ENCODE measurements at regions of chr15 and their contacts with region 1.

Region 1: GRCh38 chr15:29747837-29748417 is 74.3 kb downstream of the TJP1 start:
- DNase-seq: peak; percentile 49
- H3K4me3 ChIP-seq: no peak overlapping the region
- H3K27ac ChIP-seq: no peak overlapping the region
- H3K4me1 ChIP-seq: no peaks in the 10 kb centered on the region
- H3K27me3 ChIP-seq: no peaks in the 10 kb centered on the region
- CTCF ChIP-seq: peak; percentile 7 to 21
- POLR2A ChIP-seq: no peak

Region 2: DNA sequence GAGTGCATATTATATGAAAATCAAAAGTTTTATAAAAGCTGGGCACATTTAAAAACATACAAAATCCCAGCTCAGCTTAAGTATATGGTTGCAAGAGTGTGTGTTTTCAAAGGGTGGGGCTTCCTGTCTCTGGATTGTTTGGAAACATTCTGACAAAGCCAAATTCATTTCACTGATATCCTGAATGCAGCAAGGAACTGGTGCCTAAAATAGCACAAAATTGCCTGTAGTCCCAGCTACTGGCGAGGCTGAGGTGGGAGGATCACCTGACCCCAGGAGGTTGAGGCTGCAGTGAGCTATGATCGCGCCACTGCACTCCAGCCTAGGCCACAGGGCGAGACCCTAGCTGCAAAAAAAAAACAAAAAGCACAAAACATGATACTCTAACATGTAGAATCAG is 87.4 kb after region 1 on chr15:
- CTCF ChIA-PET with region 1: interaction called, 17 read pairs
- POLR2A ChIA-PET with region 1: no interaction called
- dilution Hi-C with region 1: no loop called
- intact Hi-C with region 1: no loop called
- DNase-seq: peak; percentile 46
- H3K4me3 ChIP-seq: no peak overlapping the region
- H3K27ac ChIP-seq: no peak overlapping the region
- H3K4me1 ChIP-seq: peaks cover 5% of the 10 kb centered on the region
- H3K27me3 ChIP-seq: no peaks in the 10 kb centered on the region
- CTCF ChIP-seq: no peak
- POLR2A ChIP-seq: no peak

Region 3: GRCh38 chr15:29859973-29860715 is 112.2 kb after region 1 on chr15:
- CTCF ChIA-PET with region 1: interaction called, 14 read pairs
- POLR2A ChIA-PET with region 1: no interaction called
- dilution Hi-C with region 1: no loop called
- intact Hi-C with region 1: no loop called
- DNase-seq: no peak
- H3K4me3 ChIP-seq: no peak overlapping the region
- H3K27ac ChIP-seq: no peak overlapping the region
- H3K4me1 ChIP-seq: no peaks in the 10 kb centered on the region
- H3K27me3 ChIP-seq: peaks cover 0 to 2% of the 10 kb centered on the region in 2 experiments
- CTCF ChIP-seq: no peak
- POLR2A ChIP-seq: no peak

Region 4: GRCh38 chr15:29942143-29942542 is 194.2 kb after region 1 on chr15:
- CTCF ChIA-PET with region 1: interaction called, 19 read pairs
- POLR2A ChIA-PET with region 1: no interaction called
- dilution Hi-C with region 1: no loop called
- intact Hi-C with region 1: no loop called
- DNase-seq: no peak
- H3K4me3 ChIP-seq: no peak overlapping the region
- H3K27ac ChIP-seq: no peak overlapping the region
- H3K4me1 ChIP-seq: peaks cover 10% of the 10 kb centered on the region
- H3K27me3 ChIP-seq: no peaks in the 10 kb centered on the region
- CTCF ChIP-seq: peak in 1 of 2 donors; percentile 18
- POLR2A ChIP-seq: no peak

Region 5: GRCh38 chr15:29970405-29970701 is 222.4 kb after region 1 on chr15:
- CTCF ChIA-PET with region 1: interaction called, 11 read pairs
- POLR2A ChIA-PET with region 1: no interaction called
- dilution Hi-C with region 1: no loop called
- intact Hi-C with region 1: no loop called
- DNase-seq: peak; percentile 45
- H3K4me3 ChIP-seq: no peak overlapping the region
- H3K27ac ChIP-seq: no peak overlapping the region
- H3K4me1 ChIP-seq: peaks cover 2% of the 10 kb centered on the region
- H3K27me3 ChIP-seq: peaks cover 36 to 53% of the 10 kb centered on the region in 2 experiments
- CTCF ChIP-seq: no peak
- POLR2A ChIP-seq: no peak

Region 6: GRCh38 chr15:30043211-30043655 is 295.3 kb after region 1 on chr15:
- CTCF ChIA-PET with region 1: interaction called, 20 read pairs
- POLR2A ChIA-PET with region 1: no interaction called
- dilution Hi-C with region 1: no loop called
- intact Hi-C with region 1: no loop called
- DNase-seq: peak; percentile 35
- H3K4me3 ChIP-seq: no peak overlapping the region
- H3K27ac ChIP-seq: no peak overlapping the region
- H3K4me1 ChIP-seq: no peaks in the 10 kb centered on the region
- H3K27me3 ChIP-seq: no peaks in the 10 kb centered on the region
- CTCF ChIP-seq: no peak
- POLR2A ChIP-seq: no peak

Region 7: GRCh38 chr15:30073915-30074314 is 326.0 kb after region 1 on chr15:
- CTCF ChIA-PET with region 1: interaction called, 73 read pairs
- POLR2A ChIA-PET with region 1: no interaction called
- dilution Hi-C with region 1: no loop called
- intact Hi-C with region 1: no loop called
- DNase-seq: no peak
- H3K4me3 ChIP-seq: no peak overlapping the region
- H3K27ac ChIP-seq: no peak overlapping the region
- H3K4me1 ChIP-seq: no peaks in the 10 kb centered on the region
- H3K27me3 ChIP-seq: peaks cover 1 to 2% of the 10 kb centered on the region in 2 experiments
- CTCF ChIP-seq: no peak
- POLR2A ChIP-seq: no peak

Measured in endothelial cell of umbilical vein (primary cell).